Head of caudate nucleus (tissue), 42 donors: ENCODE measurements at regions of chrX and their contacts with region 1.

Region 1: GRCh38 chrX:96792047-96792446 is 91.7 kb upstream of the RPA4 start:
- DNase-seq: no peak

Region 2: GRCh38 chrX:96770315-96770714 is 21.7 kb before region 1 on chrX:
- intact Hi-C with region 1: loop called (anchors 2 kb)
- DNase-seq: no peak